PC-3 (cell line): ENCODE measurements at regions of chr4 and their contacts with region 1.

Region 1: DNA sequence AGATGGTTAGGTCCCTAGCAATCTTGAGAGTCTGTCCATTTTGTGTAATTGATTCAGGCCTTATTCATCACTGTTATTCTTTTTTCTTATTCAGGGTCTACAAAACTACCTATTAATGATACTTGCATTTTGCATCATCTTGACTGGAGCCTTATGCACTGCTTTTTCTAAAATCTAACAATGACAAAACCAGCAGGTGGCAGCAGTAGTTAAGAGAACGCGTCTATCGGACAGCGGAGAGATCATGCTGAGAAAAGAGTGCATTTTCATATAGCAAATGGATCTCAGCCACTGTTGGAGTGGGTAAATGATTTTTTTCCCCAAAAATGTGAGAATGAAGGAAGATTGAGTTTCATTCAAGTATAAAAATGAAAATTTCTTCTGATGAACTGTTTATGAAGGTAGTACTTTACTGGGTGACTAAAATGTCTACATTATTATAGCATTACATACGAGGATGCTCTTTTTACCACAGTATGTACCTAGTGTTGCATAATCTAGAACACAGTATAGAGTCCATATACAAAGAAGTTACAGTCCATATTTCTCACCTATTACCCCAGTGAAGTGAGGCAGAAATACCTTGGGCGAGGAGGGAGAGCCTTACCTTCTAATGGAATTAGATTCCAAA is 43.2 kb downstream of the TMEM144 start:
- DNase-seq: peak; percentile 72
- ATAC-seq: peak; percentile 74
- H3K4me3 ChIP-seq: no peak overlapping the region
- H3K27ac ChIP-seq: no peak overlapping the region
- H3K4me1 ChIP-seq: no peaks in the 10 kb centered on the region
- H3K27me3 ChIP-seq: no peaks in the 10 kb centered on the region
- CTCF ChIP-seq: peak; percentile 78

Region 2: GRCh38 chr4:158193171-158193749 is 60.2 kb before region 1 on chr4:
- CTCF ChIA-PET with region 1: no interaction called
- POLR2A ChIA-PET with region 1: no interaction called
- intact Hi-C with region 1: loop called (anchors 1 kb)
- DNase-seq: peak; percentile 62
- ATAC-seq: peak; percentile 46
- H3K4me3 ChIP-seq: no peak overlapping the region
- H3K27ac ChIP-seq: no peak overlapping the region
- H3K4me1 ChIP-seq: no peaks in the 10 kb centered on the region
- H3K27me3 ChIP-seq: no peaks in the 10 kb centered on the region
- CTCF ChIP-seq: peak; percentile 67

Region 3: GRCh38 chr4:158821228-158821971 is 567.9 kb after region 1 on chr4:
- CTCF ChIA-PET with region 1: no interaction called
- POLR2A ChIA-PET with region 1: no interaction called
- intact Hi-C with region 1: loop called (anchors 5 kb)
- DNase-seq: no peak
- ATAC-seq: no peak
- H3K4me3 ChIP-seq: no peak overlapping the region
- H3K27ac ChIP-seq: no peak overlapping the region
- H3K4me1 ChIP-seq: peaks cover 46% of the 10 kb centered on the region
- H3K27me3 ChIP-seq: no peaks in the 10 kb centered on the region
- CTCF ChIP-seq: no peak